HEK293 (cell line): ENCODE measurements at regions of chr22 and their contacts with region 1.

Region 1: GRCh38 chr22:40679964-40680818 is 907 bp downstream of the MCHR1 start:
- H3K4me3 ChIP-seq: no peak overlapping the region
- H3K27ac ChIP-seq: no peak overlapping the region
- H3K4me1 ChIP-seq: no peaks in the 10 kb centered on the region; the same call in 1 of the 2 replicates
- CTCF ChIP-seq: no peak

Region 2: GRCh38 chr22:40651563-40652501 is 28.4 kb before region 1 on chr22:
- CTCF ChIA-PET with region 1: interaction called, 6 read pairs
- POLR2A ChIA-PET with region 1: interaction called, 14 read pairs
- H3K4me3 ChIP-seq: peak overlapping the region; percentile 71
- H3K27ac ChIP-seq: peak overlapping the region; percentile 88
- H3K4me1 ChIP-seq: peaks cover 3% of the 10 kb centered on the region; the same call in 1 of the 2 replicates
- CTCF ChIP-seq: no peak

Region 3: GRCh38 chr22:40703174-40703573 is 23.0 kb after region 1 on chr22:
- CTCF ChIA-PET with region 1: interaction called, 13 read pairs
- POLR2A ChIA-PET with region 1: interaction called, 3 read pairs
- H3K4me3 ChIP-seq: no peak overlapping the region
- H3K27ac ChIP-seq: no peak overlapping the region; the same call in 1 of the 2 replicates
- H3K4me1 ChIP-seq: no peaks in the 10 kb centered on the region
- CTCF ChIP-seq: no peak

Region 4: DNA sequence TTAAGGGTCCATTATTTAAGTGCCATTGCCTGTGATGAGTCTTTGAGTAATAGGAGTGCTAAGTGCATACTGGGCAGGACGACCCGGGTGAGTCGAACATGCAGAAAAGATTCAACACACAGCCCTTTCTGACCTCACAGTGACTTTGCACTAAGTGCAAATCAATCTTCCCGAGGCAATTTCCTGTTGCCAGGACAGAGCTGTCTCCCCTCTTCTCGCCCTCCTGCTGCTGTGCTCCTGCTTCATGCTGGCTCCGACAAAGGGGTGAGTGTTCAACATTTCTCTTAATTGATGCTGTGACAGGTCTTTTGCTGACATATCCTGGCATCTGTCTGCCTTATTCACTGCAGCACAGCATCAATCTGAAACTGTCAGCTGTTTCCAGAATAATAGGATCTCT is 41.1 kb after region 1 on chr22:
- CTCF ChIA-PET with region 1: interaction called, 15 read pairs
- POLR2A ChIA-PET with region 1: interaction called, 8 read pairs
- H3K4me3 ChIP-seq: no peak overlapping the region
- H3K27ac ChIP-seq: peak overlapping the region; percentile 75
- H3K4me1 ChIP-seq: peaks cover 14% of the 10 kb centered on the region
- CTCF ChIP-seq: no peak

Region 5: GRCh38 chr22:40746428-40747220 is 66.4 kb after region 1 on chr22:
- CTCF ChIA-PET with region 1: interaction called, 13 read pairs
- POLR2A ChIA-PET with region 1: no interaction called
- H3K4me3 ChIP-seq: no peak overlapping the region
- H3K27ac ChIP-seq: no peak overlapping the region
- H3K4me1 ChIP-seq: peaks cover 2% of the 10 kb centered on the region; the same call in 1 of the 2 replicates
- CTCF ChIP-seq: no peak

Region 6: GRCh38 chr22:40818747-40819598 is 138.8 kb after region 1 on chr22 and contains the start of gene SLC25A17:
- CTCF ChIA-PET with region 1: interaction called, 6 read pairs
- POLR2A ChIA-PET with region 1: interaction called, 14 read pairs
- H3K4me3 ChIP-seq: peak within 1 kb of the TSS; percentile 87
- H3K27ac ChIP-seq: peak within 1 kb of the TSS; percentile 91
- H3K4me1 ChIP-seq: no peaks in the 10 kb centered on the region
- CTCF ChIP-seq: peak; percentile 85

Region 7: DNA sequence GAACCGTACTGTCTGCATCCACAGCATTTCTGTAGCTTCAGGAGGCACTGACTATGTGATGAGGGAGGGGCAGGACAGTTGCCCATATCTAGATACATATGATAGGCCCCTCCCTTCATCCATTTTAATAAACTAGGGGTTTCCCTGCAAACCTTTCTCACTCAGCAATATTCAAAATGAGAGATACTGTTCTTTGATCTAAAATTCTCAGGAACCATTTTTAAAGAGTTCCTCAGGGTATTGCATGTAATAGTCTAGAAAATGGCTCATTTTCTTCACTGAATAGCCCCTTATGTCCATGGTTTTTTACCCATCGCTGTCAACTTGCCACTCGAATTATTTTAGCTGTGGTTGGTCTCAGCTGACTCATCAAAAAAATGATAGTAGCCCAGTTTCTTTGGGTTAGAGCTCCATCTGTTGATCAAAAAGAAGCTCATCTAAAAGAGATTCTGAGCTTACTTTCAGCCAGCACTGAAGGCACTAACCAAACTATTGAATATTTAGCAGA is 218.7 kb after region 1 on chr22:
- CTCF ChIA-PET with region 1: interaction called, 25 read pairs
- POLR2A ChIA-PET with region 1: no interaction called
- H3K4me3 ChIP-seq: no peak overlapping the region
- H3K27ac ChIP-seq: no peak overlapping the region
- H3K4me1 ChIP-seq: no peaks in the 10 kb centered on the region
- CTCF ChIP-seq: 0 out of 2 replicates have a peak, but pooled peaks have one; percentile 37